Heart right ventricle (tissue), 16 donors: ENCODE measurements at regions of chr5 and their contacts with region 1.

Region 1: GRCh38 chr5:13878357-13878756 is 66.1 kb downstream of the DNAH5 start:
- DNase-seq: no peak
- ATAC-seq: no peak
- H3K4me3 ChIP-seq: no peak overlapping the region
- H3K27ac ChIP-seq: no peak overlapping the region
- H3K4me1 ChIP-seq: no peaks in the 10 kb centered on the region
- H3K27me3 ChIP-seq: no peaks in the 10 kb centered on the region
- CTCF ChIP-seq: no peak

Region 2: GRCh38 chr5:13771011-13771571 is 107.3 kb before region 1 on chr5:
- intact Hi-C with region 1: no loop called
- DNase-seq: no peak
- ATAC-seq: no peak
- H3K4me3 ChIP-seq: no peak overlapping the region
- H3K27ac ChIP-seq: no peak overlapping the region
- H3K4me1 ChIP-seq: no peaks in the 10 kb centered on the region
- H3K27me3 ChIP-seq: peaks cover 0 to 3% (median 0%) of the 10 kb centered on the region in 7 donors
- CTCF ChIP-seq: no peak

Region 3: GRCh38 chr5:13843175-13843846 is 35.0 kb before region 1 on chr5:
- intact Hi-C with region 1: loop called in 1 of 10 experiments (anchors 1 kb)
- DNase-seq: no peak
- ATAC-seq: no peak
- H3K4me3 ChIP-seq: no peak overlapping the region
- H3K27ac ChIP-seq: no peak overlapping the region
- H3K4me1 ChIP-seq: no peaks in the 10 kb centered on the region
- H3K27me3 ChIP-seq: no peaks in the 10 kb centered on the region
- CTCF ChIP-seq: no peak